ENCODE measurements at regions of chr21 and their contacts with region 1.

Region 1: DNA sequence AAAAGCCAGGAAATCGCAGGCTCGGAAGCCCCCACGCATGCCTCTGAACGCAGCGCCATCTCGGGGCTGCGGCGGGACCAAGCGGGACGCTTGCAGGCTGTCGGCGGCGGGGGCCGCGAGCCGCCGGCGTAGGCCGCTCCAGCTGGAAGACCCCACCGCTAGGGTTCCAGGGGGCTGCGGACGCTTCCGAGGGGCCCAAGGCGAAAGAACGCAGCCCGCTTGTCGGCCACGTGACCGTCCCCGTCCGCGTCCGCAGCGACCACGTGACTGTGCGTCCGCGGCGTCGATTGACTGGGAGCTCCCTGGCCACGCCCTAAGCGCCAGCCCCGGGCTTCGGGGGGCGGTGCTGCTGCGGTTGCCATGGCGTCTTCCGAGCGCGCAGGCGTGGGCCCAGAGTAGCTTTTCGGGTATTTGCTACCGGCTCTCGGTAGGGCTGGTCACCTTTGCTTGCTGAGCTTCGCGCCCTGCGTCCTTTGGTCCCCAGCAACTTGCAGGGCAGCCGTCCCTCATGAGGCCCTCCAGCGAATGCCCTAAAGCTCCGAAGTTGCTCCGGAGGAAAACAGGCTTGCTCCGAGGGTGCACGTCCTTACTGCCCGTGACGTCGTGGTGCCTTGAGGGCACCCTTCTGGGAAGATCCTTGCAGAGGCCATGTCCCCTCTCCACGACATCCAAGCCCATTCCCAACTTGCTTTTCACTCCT is 197.2 kb downstream of the DYRK1A start:
- DNase-seq: peak; percentile 66 to 93
- ATAC-seq: peak; percentile 81 to 91
- H3K4me3 ChIP-seq: peak overlapping the region; percentile 61
- H3K27ac ChIP-seq: peak overlapping the region; percentile 96 to 98
- H3K4me1 ChIP-seq: peaks cover 21% of the 10 kb centered on the region
- CTCF ChIP-seq: 0 out of 3 replicates have a peak, but pooled peaks have one; percentile 20
- EP300 ChIP-seq: no peak
- POLR2A ChIP-seq: peak; percentile 76
- RAD21 ChIP-seq: peak in 1 of 2 experiments; percentile 21; a peak in 1 of 5 replicates

Region 2: GRCh38 chr21:37366482-37367316 is 197.1 kb before region 1 on chr21 and contains the start of gene DYRK1A:
- CTCF ChIA-PET with region 1: no interaction called
- POLR2A ChIA-PET with region 1: interaction called, 14 read pairs
- DNase-seq: peak; percentile 85 to 98
- ATAC-seq: peak; percentile 82 to 87
- H3K4me3 ChIP-seq: peak within 1 kb of the TSS; percentile 79
- H3K27ac ChIP-seq: peak within 1 kb of the TSS; percentile 98 to 99
- H3K4me1 ChIP-seq: peaks cover 27% of the 10 kb centered on the region; the same call in 2 of the 3 replicates
- CTCF ChIP-seq: no peak
- EP300 ChIP-seq: no peak
- POLR2A ChIP-seq: peak; percentile 55
- RAD21 ChIP-seq: no peak
- polyA plus RNA-seq, gene DYRK1A: 29.4 and 33.5 TPM in 2 replicates

Region 3: DNA sequence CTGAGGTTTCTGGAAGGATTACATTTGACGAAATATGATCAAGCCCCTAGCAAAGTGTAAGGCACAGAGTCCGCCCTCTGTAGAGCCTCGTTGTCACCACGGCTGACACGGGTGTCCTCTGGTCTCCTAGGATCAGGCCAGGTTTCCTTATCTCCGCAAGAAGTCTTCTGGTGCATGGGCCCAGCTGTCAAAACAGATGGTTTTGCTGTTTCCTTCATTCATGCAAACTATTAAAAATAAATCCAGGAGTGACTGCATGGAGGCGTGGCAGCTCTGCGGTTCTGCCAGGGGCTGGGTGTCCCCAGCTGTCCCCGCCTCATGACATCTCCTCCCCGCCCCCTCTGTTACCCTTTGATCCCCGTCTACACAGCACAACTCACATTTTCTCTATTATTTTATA is 11.8 kb after region 1 on chr21:
- CTCF ChIA-PET with region 1: interaction called, 5 read pairs
- POLR2A ChIA-PET with region 1: interaction called, 12 read pairs
- DNase-seq: no peak
- ATAC-seq: no peak
- H3K4me3 ChIP-seq: no peak overlapping the region
- H3K27ac ChIP-seq: no peak overlapping the region
- H3K4me1 ChIP-seq: no peaks in the 10 kb centered on the region
- CTCF ChIP-seq: no peak
- EP300 ChIP-seq: no peak
- POLR2A ChIP-seq: no peak
- RAD21 ChIP-seq: no peak

Region 4: GRCh38 chr21:37675202-37675801 is 111.5 kb after region 1 on chr21:
- CTCF ChIA-PET with region 1: interaction called, 11 read pairs
- POLR2A ChIA-PET with region 1: interaction called, 12 read pairs
- DNase-seq: peak; percentile 14 to 49
- ATAC-seq: peak; percentile 77 to 91; a peak in 5 of 6 replicates
- H3K4me3 ChIP-seq: no peak overlapping the region
- H3K27ac ChIP-seq: peak overlapping the region; percentile 56 to 65; a peak in 5 of 6 replicates
- H3K4me1 ChIP-seq: peaks cover 26% of the 10 kb centered on the region
- CTCF ChIP-seq: peak; percentile 73
- EP300 ChIP-seq: no peak
- POLR2A ChIP-seq: no peak
- RAD21 ChIP-seq: peak; percentile 65 to 76